ENCODE measurements at regions of chr4 and their contacts with region 1.

Region 1: GRCh38 chr4:173013232-173013930 is 155.2 kb upstream of the GALNT7 start:
- DNase-seq: no peak
- ATAC-seq: peak; percentile 61 to 80 (median 74)
- H3K4me3 ChIP-seq: no peak overlapping the region
- H3K27ac ChIP-seq: no peak overlapping the region
- H3K4me1 ChIP-seq: no peaks in the 10 kb centered on the region
- H3K27me3 ChIP-seq: no peaks in the 10 kb centered on the region
- CTCF ChIP-seq: peak; percentile 41 to 64 (median 60)
- POLR2A ChIP-seq: no peak

Region 2: GRCh38 chr4:172900930-172901329 is 112.5 kb before region 1 on chr4:
- intact Hi-C with region 1: no loop called
- DNase-seq: no peak
- ATAC-seq: no peak
- H3K4me3 ChIP-seq: no peak overlapping the region
- H3K27ac ChIP-seq: no peak overlapping the region
- H3K4me1 ChIP-seq: no peaks in the 10 kb centered on the region
- H3K27me3 ChIP-seq: no peaks in the 10 kb centered on the region
- CTCF ChIP-seq: no peak
- POLR2A ChIP-seq: no peak

Region 3: DNA sequence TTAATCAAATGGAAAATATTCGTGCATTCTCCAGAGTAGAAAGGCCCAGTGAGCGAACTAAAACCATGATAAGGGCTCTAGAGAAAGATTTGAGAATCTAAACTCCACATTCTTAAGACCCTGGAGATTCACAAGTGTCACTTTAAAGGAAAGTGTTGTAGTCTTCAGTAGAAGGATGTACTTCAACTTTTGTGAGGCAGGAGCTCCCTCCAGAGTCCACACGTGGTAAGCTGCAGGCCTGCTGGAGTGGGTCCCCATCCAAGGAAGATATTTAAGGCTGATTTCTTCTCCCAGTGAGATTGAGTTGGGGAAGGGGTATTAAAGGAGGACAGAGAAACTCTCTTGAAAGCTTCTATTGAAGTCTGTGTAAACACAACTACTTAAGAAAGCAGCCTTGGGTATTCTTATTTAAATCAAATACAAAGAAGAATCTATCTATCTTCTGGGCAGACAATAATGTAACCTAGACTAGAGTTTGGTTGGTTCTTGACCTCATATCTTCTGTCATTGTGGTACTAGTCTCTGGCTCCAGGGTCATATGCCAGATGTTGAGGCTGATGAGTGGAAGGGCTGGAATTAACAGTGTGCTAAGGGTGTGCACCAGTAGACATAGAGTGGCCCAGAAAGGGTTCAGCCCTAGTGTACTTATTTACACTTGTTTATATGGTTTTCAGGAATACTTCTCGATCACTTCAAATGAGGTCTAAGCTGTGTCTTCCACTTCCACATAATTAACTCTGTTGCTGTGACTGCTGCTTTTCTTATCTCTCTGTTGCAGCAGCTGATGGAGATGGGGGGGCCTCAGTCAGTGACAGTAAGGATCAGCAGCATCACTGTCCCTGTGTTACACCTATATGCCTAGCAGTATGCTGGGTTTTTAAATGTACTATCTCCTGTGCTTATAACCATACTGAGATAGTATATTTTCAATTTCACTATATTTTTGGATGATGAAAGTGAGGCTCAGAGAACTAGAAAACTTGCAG is 244.6 kb after region 1 on chr4:
- intact Hi-C with region 1: loop called (anchors 10 kb)
- DNase-seq: peak in 2 of 3 donors; percentile 37 to 50
- ATAC-seq: peak; percentile 72 to 87 (median 82)
- H3K4me3 ChIP-seq: no peak overlapping the region
- H3K27ac ChIP-seq: no peak overlapping the region
- H3K4me1 ChIP-seq: no peaks in the 10 kb centered on the region
- H3K27me3 ChIP-seq: no peaks in the 10 kb centered on the region
- CTCF ChIP-seq: peak; percentile 49 to 70 (median 60)
- POLR2A ChIP-seq: no peak